ENCODE measurements at regions of chr10 and their contacts with region 1.

Region 1: DNA sequence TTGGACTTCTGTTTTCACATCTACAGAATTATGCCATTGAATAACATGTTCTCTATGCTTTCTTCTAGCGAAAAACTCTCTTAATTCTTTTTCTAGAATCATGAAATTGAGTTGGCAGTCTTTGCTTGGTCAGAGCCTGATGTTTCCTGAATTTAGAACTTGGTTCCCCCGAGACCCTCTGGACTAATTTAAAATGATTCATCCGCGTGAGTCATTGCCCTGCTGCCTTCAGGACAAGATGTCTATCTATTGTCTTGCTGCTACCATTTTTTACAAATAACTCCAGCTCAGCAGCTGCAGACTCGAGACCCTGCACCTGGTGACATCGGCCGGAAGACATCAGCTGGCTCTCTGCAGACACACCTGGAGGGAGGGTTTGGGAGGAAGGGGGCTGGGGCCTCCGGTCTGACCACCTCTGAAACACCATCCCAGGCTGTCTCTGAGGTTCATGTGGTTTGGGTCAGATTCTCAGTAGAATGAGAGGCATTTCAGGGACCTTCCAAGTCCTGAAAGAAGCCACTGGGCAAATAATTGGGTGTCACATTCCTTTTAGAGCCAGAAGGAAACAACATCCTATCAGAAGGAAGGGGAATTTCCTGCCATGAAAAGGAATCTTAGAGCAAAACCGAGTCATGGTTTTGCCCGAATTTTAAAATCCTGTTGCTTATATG is 20.9 kb upstream of the KLF6 start:
- DNase-seq: peak; percentile 49 to 73
- ATAC-seq: peak in 1 of 3 donors; percentile 3
- H3K4me3 ChIP-seq: no peak overlapping the region
- H3K4me3 Mint-ChIP-seq: peak overlapping the region; percentile 66
- H3K27ac ChIP-seq: peak overlapping the region; percentile 100
- H3K27ac Mint-ChIP-seq: no peak overlapping the region
- H3K4me1 ChIP-seq: peaks cover 76% of the 10 kb centered on the region
- H3K4me1 Mint-ChIP-seq: peaks cover 59 to 75% of the 10 kb centered on the region in 2 donors
- H3K27me3 ChIP-seq: no peaks in the 10 kb centered on the region
- H3K27me3 Mint-ChIP-seq: no peaks in the 10 kb centered on the region
- CTCF ChIP-seq: no peak

Region 2: DNA sequence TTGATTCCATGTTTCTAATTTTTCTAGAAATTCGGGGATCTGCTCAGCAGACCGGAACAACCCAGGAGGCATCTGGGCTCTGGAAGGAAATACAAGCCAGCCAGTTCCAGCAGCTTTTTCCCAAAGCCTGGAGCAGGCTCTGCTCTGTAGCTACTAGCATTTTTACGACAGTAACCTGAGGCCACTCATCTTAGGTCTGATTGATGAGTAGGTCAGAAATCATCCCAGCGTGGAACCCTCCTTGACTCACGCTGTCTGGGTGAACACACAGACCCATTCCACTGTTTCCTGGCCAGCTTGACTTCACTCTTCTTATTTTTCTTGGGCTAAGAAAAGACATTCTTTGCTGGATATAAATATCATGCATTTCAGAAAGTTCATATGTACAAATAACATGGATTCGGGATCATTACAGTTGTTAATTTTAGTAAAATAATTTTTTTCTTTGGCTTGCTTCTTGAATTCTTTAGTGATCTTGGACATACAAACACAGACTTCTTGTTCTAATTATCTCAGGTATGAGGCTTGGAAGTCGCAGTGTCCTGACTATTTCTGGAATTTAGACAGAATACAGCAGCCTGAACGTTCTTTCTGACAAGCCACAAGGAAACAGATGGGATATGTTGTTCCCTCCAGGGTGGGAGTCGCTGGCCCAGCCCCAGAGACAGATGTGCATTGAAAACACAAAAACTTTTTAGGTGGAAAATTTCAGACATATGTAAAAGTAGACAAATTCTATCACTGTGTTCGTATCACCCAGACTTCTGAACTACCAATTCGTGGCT is 578.8 kb before region 1 on chr10:
- intact Hi-C with region 1: loop called (anchors 2 kb)
- DNase-seq: no peak
- ATAC-seq: peak in 2 of 3 donors; percentile 1 to 7
- H3K4me3 ChIP-seq: no peak overlapping the region
- H3K4me3 Mint-ChIP-seq: peak overlapping the region; percentile 49
- H3K27ac ChIP-seq: no peak overlapping the region
- H3K27ac Mint-ChIP-seq: peak overlapping the region; percentile 69 to 90
- H3K4me1 ChIP-seq: peaks cover 21% of the 10 kb centered on the region
- H3K4me1 Mint-ChIP-seq: no peaks in the 10 kb centered on the region
- H3K27me3 ChIP-seq: no peaks in the 10 kb centered on the region
- H3K27me3 Mint-ChIP-seq: peaks cover 7 to 14% of the 10 kb centered on the region in 2 donors
- CTCF ChIP-seq: no peak

Region 3: DNA sequence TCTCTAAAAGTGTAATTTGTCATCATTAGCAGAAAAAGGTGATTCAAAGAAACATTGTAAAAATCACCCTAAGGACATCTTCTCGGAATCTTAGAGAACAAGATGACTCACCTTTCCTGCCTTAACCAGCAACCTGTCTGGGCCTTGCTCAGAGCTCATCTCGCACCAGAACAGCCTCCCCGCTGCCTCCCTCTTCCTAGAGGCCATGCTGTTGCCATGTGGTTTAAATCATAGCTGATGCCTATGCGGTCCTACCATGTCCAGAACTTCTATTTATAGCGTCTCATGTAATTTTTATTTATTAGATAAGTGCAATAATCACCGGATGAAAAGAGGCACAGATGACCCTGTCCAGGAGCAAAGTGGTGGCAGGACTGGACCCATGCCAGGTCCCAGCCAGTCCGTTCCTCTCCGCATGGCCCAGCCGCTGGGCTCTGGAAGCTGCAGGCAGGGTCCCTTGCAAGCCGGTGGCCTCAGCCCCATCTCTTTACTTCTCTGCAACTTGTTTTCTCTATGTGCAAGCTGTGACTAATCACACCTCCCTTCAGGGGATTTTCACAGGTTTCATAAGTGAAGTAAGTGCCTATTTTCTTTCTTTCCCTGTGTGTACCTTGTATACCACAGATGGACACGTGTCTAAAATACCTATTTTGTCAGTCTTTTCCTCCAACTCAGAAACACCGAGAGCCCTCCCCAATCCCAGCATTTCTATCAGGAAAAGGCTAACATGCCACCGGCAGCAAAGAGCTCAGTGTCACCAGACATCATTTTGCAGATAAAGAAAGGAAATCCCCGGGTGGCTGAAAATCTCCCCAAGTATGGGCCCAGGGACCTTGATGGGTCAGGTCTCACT is 48.1 kb before region 1 on chr10:
- intact Hi-C with region 1: loop called (anchors 1 kb)
- DNase-seq: peak in 1 of 2 donors; percentile 80
- ATAC-seq: peak; percentile 84 to 92 (median 89)
- H3K4me3 ChIP-seq: no peak overlapping the region
- H3K4me3 Mint-ChIP-seq: peak overlapping the region; percentile 84
- H3K27ac ChIP-seq: peak overlapping the region; percentile 87
- H3K27ac Mint-ChIP-seq: peak overlapping the region; percentile 91 to 95
- H3K4me1 ChIP-seq: peaks cover 43% of the 10 kb centered on the region
- H3K4me1 Mint-ChIP-seq: peaks cover 26 to 34% of the 10 kb centered on the region in 2 donors
- H3K27me3 ChIP-seq: no peaks in the 10 kb centered on the region
- H3K27me3 Mint-ChIP-seq: no peaks in the 10 kb centered on the region
- CTCF ChIP-seq: no peak

Region 4: GRCh38 chr10:3785257-3785850 is 20.6 kb before region 1 on chr10:
- intact Hi-C with region 1: loop called (anchors 1 kb)
- DNase-seq: peak; percentile 99 to 100
- ATAC-seq: peak; percentile 64 to 88 (median 76)
- H3K4me3 ChIP-seq: peak overlapping the region; percentile 86
- H3K4me3 Mint-ChIP-seq: peak overlapping the region; percentile 99
- H3K27ac ChIP-seq: peak overlapping the region; percentile 93
- H3K27ac Mint-ChIP-seq: peak overlapping the region; percentile 100
- H3K4me1 ChIP-seq: peaks cover 22% of the 10 kb centered on the region
- H3K4me1 Mint-ChIP-seq: peaks cover 49 to 56% of the 10 kb centered on the region in 2 donors
- H3K27me3 ChIP-seq: no peaks in the 10 kb centered on the region
- H3K27me3 Mint-ChIP-seq: peaks cover 0 to 8% of the 10 kb centered on the region in 2 donors
- CTCF ChIP-seq: no peak

Region 5: DNA sequence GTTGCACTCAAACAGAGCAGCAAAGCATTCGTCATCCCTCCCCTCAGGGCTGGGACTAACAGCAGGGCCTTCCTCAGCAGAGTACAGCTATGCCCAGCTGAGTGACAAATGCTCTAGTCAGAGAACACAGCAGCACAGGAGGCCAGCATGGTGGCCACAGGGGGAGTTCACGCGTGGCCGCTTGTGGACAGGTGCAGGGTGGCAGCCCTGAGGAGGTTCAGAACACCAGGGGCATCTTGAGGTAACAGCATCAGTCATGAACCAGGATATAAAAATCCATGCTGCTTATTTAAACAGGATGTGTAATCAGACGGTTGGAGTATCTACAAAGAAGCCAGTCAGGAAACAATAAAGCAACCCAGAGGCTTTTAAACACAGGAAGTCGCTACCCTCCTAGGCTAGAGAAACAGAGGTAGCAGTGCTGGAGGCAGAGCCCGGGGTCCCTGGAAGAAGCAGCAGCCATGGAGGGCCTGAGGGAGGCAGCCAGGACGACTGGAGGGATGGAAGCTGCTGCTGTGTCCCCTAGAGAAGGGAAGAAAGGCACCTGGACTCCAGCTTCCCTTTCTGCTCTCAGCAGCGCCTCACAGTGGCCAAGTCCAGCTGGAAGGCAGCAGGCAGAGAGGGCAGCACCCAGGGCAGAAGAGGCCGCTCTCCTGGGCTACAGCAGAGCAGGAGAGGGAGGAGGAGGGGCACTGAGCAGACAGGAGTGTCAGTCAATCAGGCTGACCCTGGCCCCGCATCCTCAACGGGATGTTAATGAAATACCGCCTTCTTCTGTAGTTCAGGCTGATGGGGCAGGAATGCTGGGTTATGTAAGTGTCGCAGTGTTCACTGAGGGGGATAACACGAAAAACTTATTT is 1488.0 kb after region 1 on chr10:
- intact Hi-C with region 1: loop called (anchors 10 kb)
- DNase-seq: peak; percentile 60 to 76
- ATAC-seq: peak; percentile 40 to 46 (median 45)
- H3K4me3 ChIP-seq: no peak overlapping the region
- H3K4me3 Mint-ChIP-seq: peak overlapping the region; percentile 94
- H3K27ac ChIP-seq: peak overlapping the region; percentile 84
- H3K27ac Mint-ChIP-seq: peak overlapping the region; percentile 97 to 99
- H3K4me1 ChIP-seq: peaks cover 75% of the 10 kb centered on the region
- H3K4me1 Mint-ChIP-seq: peaks cover 95 to 97% of the 10 kb centered on the region in 2 donors
- H3K27me3 ChIP-seq: no peaks in the 10 kb centered on the region
- H3K27me3 Mint-ChIP-seq: no peaks in the 10 kb centered on the region
- CTCF ChIP-seq: peak; percentile 43